IMR-90 (cell line): ENCODE measurements at regions of chr20 and their contacts with region 1.

Region 1: DNA sequence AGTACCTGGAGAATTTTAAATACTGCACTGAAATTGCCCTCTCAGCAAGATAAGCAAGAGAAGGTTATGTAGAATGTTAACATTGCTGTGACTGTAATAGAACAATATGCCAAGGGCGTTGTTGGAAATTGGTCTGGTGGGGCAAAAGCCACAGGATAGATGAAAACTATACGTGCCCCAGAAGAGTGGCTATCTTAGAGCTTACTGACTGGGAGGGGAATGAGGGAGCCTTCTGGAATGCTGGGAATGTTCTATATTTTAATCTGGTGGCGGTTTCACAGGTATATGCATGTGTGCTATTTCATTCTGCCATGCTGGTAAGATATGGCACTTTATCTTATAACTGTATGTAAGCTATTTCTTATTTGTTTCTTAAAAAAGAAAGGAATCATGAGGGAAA is 35.2 kb upstream of the YWHAB start:
- DNase-seq: no peak
- ATAC-seq: no peak
- H3K4me3 ChIP-seq: no peak overlapping the region
- H3K27ac ChIP-seq: no peak overlapping the region
- H3K4me1 ChIP-seq: no peaks in the 10 kb centered on the region
- H3K27me3 ChIP-seq: peaks cover 1% of the 10 kb centered on the region; the same call in 1 of the 2 replicates
- CTCF ChIP-seq: no peak
- POLR2A ChIP-seq: no peak
- RAD21 ChIP-seq: no peak

Region 2: GRCh38 chr20:44785769-44786168 is 64.5 kb before region 1 on chr20:
- CTCF ChIA-PET with region 1: no interaction called
- POLR2A ChIA-PET with region 1: interaction called, 16 read pairs
- dilution Hi-C with region 1: no loop called
- in situ Hi-C with region 1: no loop called
- intact Hi-C with region 1: no loop called
- DNase-seq: no peak
- ATAC-seq: no peak
- H3K4me3 ChIP-seq: no peak overlapping the region
- H3K27ac ChIP-seq: no peak overlapping the region
- H3K4me1 ChIP-seq: no peaks in the 10 kb centered on the region
- H3K27me3 ChIP-seq: no peaks in the 10 kb centered on the region; the same call in none of the 2 replicates
- CTCF ChIP-seq: no peak
- POLR2A ChIP-seq: no peak
- RAD21 ChIP-seq: no peak

Region 3: DNA sequence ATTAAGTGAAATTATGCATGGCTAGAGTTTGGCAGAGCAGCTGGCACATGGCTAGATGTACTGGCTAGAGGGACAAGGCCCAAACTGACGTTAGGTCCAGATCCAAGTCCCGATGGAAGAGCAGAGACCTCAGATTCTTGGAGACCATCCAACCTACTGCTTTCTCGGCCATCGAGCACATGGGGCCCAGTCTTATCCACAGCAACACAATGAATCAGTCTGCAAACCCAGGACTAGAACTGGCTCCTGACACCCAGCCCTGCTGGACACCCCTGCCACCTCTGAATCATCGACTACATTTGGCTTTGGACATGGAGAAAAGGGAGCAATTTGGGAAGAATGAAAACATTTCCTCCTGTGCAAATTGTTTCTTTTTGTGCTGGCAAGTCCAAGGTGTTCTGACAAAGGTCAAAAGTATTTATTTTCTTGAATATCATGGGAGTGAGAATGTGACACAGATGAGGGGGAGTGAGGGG is 11.3 kb after region 1 on chr20:
- CTCF ChIA-PET with region 1: no interaction called
- POLR2A ChIA-PET with region 1: no interaction called
- dilution Hi-C with region 1: no loop called
- in situ Hi-C with region 1: no loop called
- intact Hi-C with region 1: no loop called
- DNase-seq: peak; percentile 18
- ATAC-seq: peak; percentile 53
- H3K4me3 ChIP-seq: no peak overlapping the region
- H3K27ac ChIP-seq: no peak overlapping the region
- H3K4me1 ChIP-seq: 0 out of 2 replicates have a peak, but pooled peaks cover 2% of the 10 kb centered on the region
- H3K27me3 ChIP-seq: peaks cover 9% of the 10 kb centered on the region
- CTCF ChIP-seq: no peak
- POLR2A ChIP-seq: no peak
- RAD21 ChIP-seq: no peak